Activated CD4-positive, alpha-beta memory T cell treated with anti-CD3 and anti-CD28 coated beads, Interleukin-2, amount 10 ng/mL, durations not matched to agents 7 days and 5 days (primary cell): ENCODE measurements at regions of chr6 and their contacts with region 1.

Region 1: DNA sequence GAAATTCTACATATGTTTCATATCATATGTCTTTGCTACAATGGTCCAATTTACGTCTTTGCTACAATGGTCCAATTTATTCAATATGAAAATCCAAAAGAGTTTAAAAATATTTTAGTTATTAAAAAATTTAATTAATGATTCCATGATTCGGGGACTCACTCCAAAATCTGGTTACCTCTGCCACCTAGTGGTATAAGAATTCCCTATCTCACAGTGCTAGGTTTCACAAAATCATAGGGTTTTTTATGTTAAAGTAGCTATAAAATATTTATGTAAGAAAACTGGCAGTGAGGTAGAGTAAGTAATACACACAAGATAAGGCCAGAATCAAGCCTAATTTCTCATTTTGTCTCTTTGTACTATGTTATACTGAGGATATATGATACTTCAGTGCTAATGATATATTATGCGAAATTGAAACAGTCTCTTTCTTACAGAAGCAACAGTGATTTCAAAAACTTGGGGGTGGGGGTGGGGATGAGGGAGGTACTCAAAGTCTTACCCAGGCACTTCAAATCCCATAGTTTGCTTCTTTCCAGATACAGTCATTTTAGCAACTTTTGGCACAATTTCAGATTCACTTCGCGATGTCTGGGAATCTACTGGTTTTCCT is 52.3 kb downstream of the HBS1L start:
- DNase-seq: no peak
- H3K4me3 Mint-ChIP-seq: no peak overlapping the region
- H3K27ac Mint-ChIP-seq: no peak overlapping the region
- H3K4me1 Mint-ChIP-seq: peaks cover 20% of the 10 kb centered on the region
- H3K27me3 Mint-ChIP-seq: no peaks in the 10 kb centered on the region

Region 2: GRCh38 chr6:135012764-135013163 is 10.4 kb after region 1 on chr6:
- CTCF ChIA-PET with region 1: interaction called, 13 read pairs
- POLR2A ChIA-PET with region 1: interaction called, 4 read pairs
- DNase-seq: no peak
- H3K4me3 Mint-ChIP-seq: no peak overlapping the region
- H3K27ac Mint-ChIP-seq: peak overlapping the region; percentile 82
- H3K4me1 Mint-ChIP-seq: peaks cover 60% of the 10 kb centered on the region
- H3K27me3 Mint-ChIP-seq: no peaks in the 10 kb centered on the region

Region 3: GRCh38 chr6:135346747-135347146 is 344.4 kb after region 1 on chr6:
- CTCF ChIA-PET with region 1: no interaction called
- POLR2A ChIA-PET with region 1: no interaction called
- DNase-seq: no peak
- H3K4me3 Mint-ChIP-seq: no peak overlapping the region
- H3K27ac Mint-ChIP-seq: no peak overlapping the region
- H3K4me1 Mint-ChIP-seq: peaks cover 8% of the 10 kb centered on the region
- H3K27me3 Mint-ChIP-seq: no peaks in the 10 kb centered on the region